Cardiac septum (tissue), 1 donor: ENCODE measurements at regions of chr9 and their contacts with region 1.

Region 1: DNA sequence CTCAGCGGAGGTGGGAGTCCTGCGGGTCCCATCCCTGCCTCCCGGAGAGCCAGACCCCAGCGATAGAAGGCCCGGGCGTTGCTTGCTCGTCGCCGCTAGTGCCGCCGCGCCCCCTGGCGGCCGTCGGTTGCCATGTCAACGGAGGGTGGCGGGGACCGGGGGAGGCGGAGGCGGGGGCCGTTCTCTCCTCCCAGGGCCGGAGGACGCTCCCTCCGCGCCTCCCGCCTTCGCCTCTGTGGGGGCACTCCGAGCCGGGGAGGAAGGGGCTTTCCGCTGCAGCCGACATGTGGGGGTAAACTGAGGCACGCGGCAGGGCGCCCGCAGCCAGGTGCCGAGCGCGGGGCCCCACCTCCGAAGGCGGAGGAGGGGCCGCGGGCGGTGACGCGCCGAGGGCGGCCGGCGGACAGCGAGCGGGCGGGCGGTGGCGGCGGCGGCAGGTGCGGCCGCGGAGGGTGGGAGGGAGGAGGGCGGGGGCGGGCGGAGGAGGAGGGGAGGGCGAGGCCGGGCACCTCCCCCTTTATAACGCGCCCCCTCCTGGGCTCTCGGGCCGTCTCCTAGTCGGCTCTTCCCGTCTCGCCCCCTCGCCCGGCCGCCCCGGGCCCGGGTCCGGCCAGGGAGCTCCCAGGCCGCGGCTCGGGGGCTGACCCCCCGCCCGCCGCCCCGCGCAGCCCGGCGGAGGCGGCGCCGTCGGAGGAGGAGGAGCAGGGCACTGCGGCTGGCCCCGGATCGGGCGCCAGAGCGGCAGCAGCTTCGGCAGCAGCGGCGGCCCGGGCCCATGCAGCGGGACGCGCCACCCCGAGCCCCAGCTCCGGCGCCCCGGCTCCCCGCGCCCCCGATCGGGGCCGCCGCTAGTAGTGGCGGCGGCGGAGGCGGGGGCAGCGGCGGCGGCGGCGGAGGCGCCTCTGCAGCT is 556 bp upstream of the CDK9 start:
- DNase-seq: peak; percentile 94

Region 2: DNA sequence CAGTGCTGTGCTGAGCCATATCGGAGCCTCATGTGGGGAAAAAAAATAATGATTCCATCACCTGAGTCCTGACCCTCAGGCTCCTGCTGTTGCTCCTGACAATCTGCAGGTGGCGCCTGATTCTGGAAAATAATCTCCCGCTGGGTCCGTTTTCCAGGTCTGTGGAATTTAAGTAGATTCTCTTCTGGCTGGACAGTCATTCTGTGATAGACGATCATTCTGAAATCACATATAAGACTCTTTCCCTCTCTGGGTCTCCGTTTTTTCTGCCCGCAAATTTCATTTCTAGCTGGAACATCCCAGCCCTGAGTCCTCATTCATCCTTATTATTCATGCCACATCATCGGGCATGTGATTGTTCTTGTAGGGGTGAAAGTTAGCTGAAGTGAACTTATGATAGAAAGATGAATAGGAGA is 195.3 kb before region 1 on chr9:
- intact Hi-C with region 1: loop called (anchors 1 kb)
- DNase-seq: no peak

Region 3: GRCh38 chr9:127664667-127665507 is 120.4 kb before region 1 on chr9:
- intact Hi-C with region 1: no loop called
- DNase-seq: no peak

Region 4: GRCh38 chr9:127698985-127699670 is 86.2 kb before region 1 on chr9:
- intact Hi-C with region 1: no loop called
- DNase-seq: peak; percentile 98

Region 5: GRCh38 chr9:127734747-127735529 is 50.3 kb before region 1 on chr9 and contains the start of gene TOR2A:
- intact Hi-C with region 1: loop called (anchors 1 kb)
- DNase-seq: peak; percentile 98
- total RNA-seq, gene TOR2A: 4.4 TPM

Region 6: DNA sequence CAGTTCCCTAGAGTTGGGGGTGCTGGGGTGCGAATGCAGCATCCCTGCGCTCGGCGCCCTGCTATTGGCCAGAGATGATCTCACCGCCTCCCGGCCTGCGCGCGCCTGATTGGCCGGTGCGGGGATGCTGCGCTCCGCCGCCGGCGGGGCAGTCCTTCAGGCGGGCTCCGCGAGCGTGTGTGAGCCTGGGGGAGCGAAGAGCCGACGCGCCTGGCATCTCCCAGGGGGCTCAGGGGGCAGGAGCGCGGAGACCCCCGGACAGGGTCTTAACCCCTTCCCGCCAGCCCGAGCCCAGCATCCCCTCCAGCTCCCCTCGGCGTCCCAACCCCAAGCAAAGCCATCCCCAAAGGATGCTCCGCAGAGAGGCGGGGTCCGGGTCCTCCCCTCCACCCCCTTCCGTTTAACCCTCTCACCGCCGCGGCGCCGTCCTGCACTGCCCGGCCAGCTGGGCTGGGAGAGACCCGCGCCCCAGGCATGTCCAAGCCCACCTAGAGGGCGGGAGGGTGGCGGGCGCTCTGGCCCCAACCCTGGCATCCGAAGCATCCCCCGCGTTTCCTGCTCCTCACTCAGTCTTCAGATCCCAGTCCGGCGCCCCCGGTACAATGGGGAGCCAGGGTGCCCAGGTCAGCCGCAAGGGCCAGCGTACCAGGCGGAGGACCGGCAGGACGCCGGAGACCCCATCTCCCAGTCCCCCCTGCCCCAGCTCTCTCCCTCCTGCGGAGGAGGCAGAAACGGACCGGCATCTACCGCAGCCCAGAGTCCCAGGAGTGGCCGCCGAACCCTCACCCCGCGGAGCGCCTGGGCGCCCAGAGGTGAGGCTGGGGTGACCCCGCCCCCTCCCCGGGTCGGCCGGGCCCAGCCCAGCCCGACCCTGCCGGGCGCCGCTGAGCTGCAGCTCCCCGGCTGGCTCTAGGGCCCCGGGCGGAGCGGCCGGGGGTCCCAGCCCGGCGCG is 30.9 kb before region 1 on chr9:
- intact Hi-C with region 1: no loop called
- DNase-seq: no peak

Region 7: GRCh38 chr9:127802576-127803443 is 17.5 kb after region 1 on chr9 and contains the start of gene FPGS:
- intact Hi-C with region 1: loop called (anchors 2 kb)
- DNase-seq: peak; percentile 93
- total RNA-seq, gene FPGS: 36.5 TPM

Region 8: DNA sequence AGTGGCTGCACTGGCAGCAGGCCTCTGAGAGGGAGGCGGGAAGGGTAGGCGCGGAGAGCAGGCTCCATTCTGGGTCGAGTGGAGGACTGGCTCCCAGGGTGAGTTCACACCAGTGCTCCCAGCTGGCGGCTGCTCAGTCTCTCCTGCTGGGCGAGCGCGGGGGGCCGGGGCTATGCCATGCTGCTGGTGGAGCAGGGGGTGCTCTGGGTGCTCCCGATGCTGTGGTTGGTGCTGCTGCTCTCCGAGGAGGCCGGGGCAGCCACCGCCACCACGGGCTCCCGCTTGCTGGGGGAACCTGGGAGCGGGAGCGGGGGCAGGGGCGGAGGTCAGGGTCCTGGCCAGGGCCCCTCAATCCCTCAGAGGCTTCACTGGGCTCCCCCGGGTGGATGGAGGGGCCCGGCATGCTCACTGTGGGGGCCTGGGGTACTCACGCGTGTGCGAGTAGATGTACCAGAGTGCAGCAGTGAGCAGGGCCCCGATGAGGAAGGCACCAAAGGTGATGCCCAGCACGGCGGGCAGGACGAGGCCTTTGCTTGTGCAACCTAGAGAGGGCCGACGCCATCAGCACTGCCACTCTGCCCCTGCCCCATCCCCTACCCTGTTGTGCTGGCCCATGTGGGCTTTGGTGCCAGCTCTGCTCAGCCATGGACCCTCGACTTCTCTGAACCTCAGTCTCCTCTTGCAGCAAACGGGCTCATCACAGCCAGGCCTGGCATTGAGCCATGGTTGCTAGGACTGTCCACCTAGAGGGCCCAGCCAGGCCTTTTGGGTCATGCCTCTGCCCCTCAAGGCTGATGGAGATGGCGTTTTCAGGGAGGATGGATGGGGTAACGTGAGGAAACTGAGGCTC is 30.5 kb after region 1 on chr9:
- intact Hi-C with region 1: no loop called
- DNase-seq: no peak

Region 9: GRCh38 chr9:127869310-127870152 is 84.3 kb after region 1 on chr9:
- intact Hi-C with region 1: loop called (anchors 2 kb)
- DNase-seq: peak; percentile 95